PC-9 (cell line): ENCODE measurements at regions of chr12 and their contacts with region 1.

Region 1: GRCh38 chr12:91704446-91704845 is 441.2 kb downstream of the BTG1 start:
- DNase-seq: no peak
- H3K4me3 ChIP-seq: no peak overlapping the region
- H3K27ac ChIP-seq: no peak overlapping the region
- H3K4me1 ChIP-seq: no peaks in the 10 kb centered on the region
- H3K27me3 ChIP-seq: no peaks in the 10 kb centered on the region
- CTCF ChIP-seq: no peak

Region 2: DNA sequence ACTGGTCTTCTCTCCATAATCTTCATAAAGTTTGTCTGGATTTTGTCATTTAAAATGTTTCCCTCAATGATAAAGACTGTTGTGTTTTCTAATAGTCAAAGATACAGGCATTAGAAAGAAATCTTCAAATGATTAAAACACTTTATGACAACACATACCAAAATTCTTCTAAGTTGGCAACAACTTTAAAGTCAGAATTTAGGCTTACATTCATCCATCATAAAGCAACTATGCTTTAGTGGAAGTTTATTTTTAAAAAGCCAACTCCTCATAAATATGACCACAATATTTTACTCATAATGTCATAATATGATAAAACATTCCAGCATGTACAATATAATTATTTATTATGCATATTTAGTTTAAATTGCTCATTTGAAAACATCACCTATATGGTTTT is 732.2 kb before region 1 on chr12:
- CTCF ChIA-PET with region 1: no interaction called
- POLR2A ChIA-PET with region 1: interaction called, 23 read pairs
- intact Hi-C with region 1: no loop called
- DNase-seq: no peak
- H3K4me3 ChIP-seq: no peak overlapping the region
- H3K27ac ChIP-seq: no peak overlapping the region
- H3K4me1 ChIP-seq: no peaks in the 10 kb centered on the region
- H3K27me3 ChIP-seq: no peaks in the 10 kb centered on the region
- CTCF ChIP-seq: no peak